Dorsolateral prefrontal cortex (tissue), 120 donors: ENCODE measurements at regions of chr3 and their contacts with region 1.

Region 1: DNA sequence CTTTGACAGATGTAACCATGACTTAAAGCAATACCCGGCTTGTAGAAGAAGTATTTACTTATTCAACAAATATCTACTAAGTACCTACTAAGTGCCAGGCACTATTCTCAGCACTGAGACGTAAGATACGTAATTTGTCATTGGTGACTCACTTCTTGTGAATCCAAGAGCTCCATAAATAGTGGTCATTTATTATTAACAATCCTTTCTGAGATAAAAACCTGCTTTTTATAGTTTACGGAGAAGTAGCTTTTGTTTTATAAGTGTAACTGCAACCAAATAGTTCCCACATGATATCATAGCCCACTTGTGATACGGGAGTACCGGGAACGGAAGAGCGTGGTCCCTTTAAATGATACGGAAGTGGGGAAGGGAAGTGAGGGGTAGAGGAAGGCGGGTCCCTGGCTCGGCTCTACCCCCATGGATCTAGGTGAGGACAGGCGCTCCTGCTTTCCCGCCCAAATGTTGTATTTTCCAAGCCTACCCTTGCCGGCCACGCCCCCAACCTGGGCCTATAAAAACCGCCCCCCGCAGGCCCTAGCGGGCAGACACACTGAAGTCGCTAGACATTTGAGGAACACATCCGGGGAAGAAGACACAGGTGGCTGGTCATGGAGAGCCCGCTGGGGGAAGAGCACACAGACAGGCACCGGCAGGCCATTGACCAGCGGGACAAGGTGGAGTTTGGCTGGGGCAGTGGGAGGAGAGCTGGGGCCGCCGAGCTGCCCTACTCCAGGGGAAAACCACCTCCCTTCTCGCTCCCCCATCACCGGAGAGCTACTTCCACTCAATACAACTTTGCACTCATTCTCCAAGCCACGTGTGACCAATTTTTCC is at the start of gene SAMMSON:
- DNase-seq: peak in 3 of 10 donors; percentile 27 to 73 (median 45)
- H3K4me3 ChIP-seq: peak within 1 kb of the TSS in 48 of 59 donors; percentile 1 to 57 (median 26)
- H3K27ac ChIP-seq: peak within 1 kb of the TSS; percentile 50 to 99 (median 96)
- H3K27me3 ChIP-seq: no peaks in the 10 kb centered on the region
- CTCF ChIP-seq: no peak
- total RNA-seq, gene SAMMSON: 0.20 to 10.8 (median 0.99) TPM in 106 of 120 experiments, not detected in the others

Region 2: DNA sequence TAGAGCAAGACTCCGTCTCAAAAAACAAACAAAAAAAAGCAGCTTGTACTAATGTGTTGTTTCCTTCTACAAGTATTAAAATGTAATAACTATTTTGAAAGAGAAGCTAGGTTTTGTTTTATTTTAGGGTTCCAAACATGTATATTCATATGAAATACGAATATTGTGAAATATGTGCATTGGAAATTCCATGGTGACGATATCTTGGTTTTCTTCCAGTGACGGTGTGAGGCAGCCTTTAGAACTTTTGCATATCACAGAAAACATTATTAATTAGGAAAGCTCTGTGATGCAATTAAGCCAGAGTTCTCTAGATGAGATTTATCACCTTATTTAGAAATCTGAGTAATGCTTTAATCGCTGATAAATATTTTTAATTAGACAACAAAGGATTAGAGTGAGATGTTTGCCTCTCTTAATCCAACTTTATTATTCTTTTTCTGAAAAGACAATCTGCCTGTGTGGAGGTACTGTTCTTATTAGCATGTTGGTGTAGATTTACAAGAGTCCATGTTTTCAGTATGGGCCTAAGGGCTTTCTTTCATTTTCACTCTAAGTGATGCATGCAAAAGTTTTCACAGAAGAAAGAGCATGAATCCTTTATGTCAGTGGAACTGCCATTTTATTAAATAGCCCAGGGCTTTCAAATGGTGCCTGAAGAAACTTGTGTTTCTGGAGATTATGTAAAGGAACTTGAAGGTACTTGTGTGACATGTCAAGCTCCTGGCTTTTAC is 37.5 kb before region 1 on chr3:
- intact Hi-C with region 1: loop called in 1 of 2 experiments (anchors 5 kb)
- DNase-seq: no peak
- H3K4me3 ChIP-seq: no peak overlapping the region
- H3K27ac ChIP-seq: peak overlapping the region in 30 of 59 donors; percentile 1 to 71 (median 30)
- H3K27me3 ChIP-seq: no peaks in the 10 kb centered on the region
- CTCF ChIP-seq: no peak

Region 3: GRCh38 chr3:70064194-70064779 is 64.9 kb after region 1 on chr3:
- intact Hi-C with region 1: loop called in 1 of 2 experiments (anchors 10 kb)
- DNase-seq: peak in 1 of 10 donors; percentile 20
- H3K4me3 ChIP-seq: no peak overlapping the region
- H3K27ac ChIP-seq: peak overlapping the region in 27 of 59 donors; percentile 1 to 62 (median 32)
- H3K27me3 ChIP-seq: no peaks in the 10 kb centered on the region
- CTCF ChIP-seq: peak; percentile 59 to 89 (median 80)